ENCODE measurements at regions of chr12 and their contacts with region 1.

Region 1: GRCh38 chr12:96361074-96361473 is 39.2 kb downstream of the CDK17 start:
- DNase-seq: no peak
- ATAC-seq: no peak
- H3K4me3 ChIP-seq: no peak overlapping the region
- H3K4me3 Mint-ChIP-seq: no peak overlapping the region
- H3K27ac ChIP-seq: no peak overlapping the region
- H3K27ac Mint-ChIP-seq: no peak overlapping the region
- H3K4me1 ChIP-seq: peaks cover 24% of the 10 kb centered on the region
- H3K4me1 Mint-ChIP-seq: peaks cover 87% of the 10 kb centered on the region
- H3K27me3 ChIP-seq: no peaks in the 10 kb centered on the region
- H3K27me3 Mint-ChIP-seq: no peaks in the 10 kb centered on the region
- CTCF ChIP-seq: no peak

Region 2: DNA sequence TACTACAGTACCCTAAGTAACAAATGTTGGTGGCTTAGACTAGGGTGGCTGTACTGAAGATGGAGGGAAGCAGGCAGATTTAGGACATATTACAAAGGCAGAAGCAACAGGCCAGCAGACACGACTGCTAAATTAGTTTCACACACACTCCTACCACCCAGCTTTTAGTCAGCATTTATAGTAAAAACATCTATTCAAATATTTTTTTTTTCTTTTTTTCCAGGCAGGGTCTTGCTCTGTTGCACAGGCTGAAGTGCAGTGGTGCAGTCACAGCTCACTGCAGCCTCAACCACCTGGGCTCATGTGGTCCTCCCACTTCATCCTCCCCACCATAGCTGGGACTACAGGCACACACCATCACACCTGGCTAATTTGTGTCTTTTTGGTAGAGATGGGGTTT is 33.7 kb before region 1 on chr12:
- CTCF ChIA-PET with region 1: interaction called, 3 read pairs
- POLR2A ChIA-PET with region 1: no interaction called
- intact Hi-C with region 1: loop called in 1 of 2 experiments (anchors 5 kb)
- DNase-seq: no peak
- ATAC-seq: peak; percentile 8
- H3K4me3 ChIP-seq: no peak overlapping the region
- H3K4me3 Mint-ChIP-seq: peak overlapping the region; percentile 22
- H3K27ac ChIP-seq: no peak overlapping the region
- H3K27ac Mint-ChIP-seq: peak overlapping the region; percentile 76
- H3K4me1 ChIP-seq: peaks cover 8% of the 10 kb centered on the region
- H3K4me1 Mint-ChIP-seq: peaks cover 77% of the 10 kb centered on the region
- H3K27me3 ChIP-seq: no peaks in the 10 kb centered on the region
- H3K27me3 Mint-ChIP-seq: no peaks in the 10 kb centered on the region
- CTCF ChIP-seq: no peak

Region 3: DNA sequence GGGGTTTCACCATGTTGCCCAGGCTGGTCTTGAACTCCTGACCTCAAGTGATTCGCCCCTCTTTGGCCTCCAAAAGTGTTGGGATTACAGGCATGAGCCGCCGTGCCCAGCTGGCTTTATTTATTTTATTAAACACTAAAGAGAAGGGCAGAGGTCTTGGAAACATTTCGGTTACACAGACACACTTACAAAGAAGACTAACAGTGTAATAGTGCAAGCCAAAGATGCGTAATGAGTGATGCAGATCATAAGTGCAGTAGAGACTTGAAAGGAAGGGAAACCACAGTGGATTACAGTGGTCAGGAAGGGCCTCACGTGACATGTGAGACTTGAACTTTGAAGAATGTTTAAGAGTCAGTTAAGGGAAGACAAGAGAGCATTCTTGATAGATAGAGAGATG is 73.0 kb after region 1 on chr12:
- CTCF ChIA-PET with region 1: no interaction called
- POLR2A ChIA-PET with region 1: no interaction called
- intact Hi-C with region 1: no loop called
- DNase-seq: peak; percentile 37 to 95 (median 57)
- ATAC-seq: peak; percentile 98
- H3K4me3 ChIP-seq: peak overlapping the region; percentile 6
- H3K4me3 Mint-ChIP-seq: peak overlapping the region; percentile 52
- H3K27ac ChIP-seq: peak overlapping the region; percentile 50 to 73
- H3K27ac Mint-ChIP-seq: peak overlapping the region; percentile 75
- H3K4me1 ChIP-seq: peaks cover 40% of the 10 kb centered on the region
- H3K4me1 Mint-ChIP-seq: peaks cover 26% of the 10 kb centered on the region
- H3K27me3 ChIP-seq: no peaks in the 10 kb centered on the region
- H3K27me3 Mint-ChIP-seq: no peaks in the 10 kb centered on the region
- CTCF ChIP-seq: no peak

Region 4: DNA sequence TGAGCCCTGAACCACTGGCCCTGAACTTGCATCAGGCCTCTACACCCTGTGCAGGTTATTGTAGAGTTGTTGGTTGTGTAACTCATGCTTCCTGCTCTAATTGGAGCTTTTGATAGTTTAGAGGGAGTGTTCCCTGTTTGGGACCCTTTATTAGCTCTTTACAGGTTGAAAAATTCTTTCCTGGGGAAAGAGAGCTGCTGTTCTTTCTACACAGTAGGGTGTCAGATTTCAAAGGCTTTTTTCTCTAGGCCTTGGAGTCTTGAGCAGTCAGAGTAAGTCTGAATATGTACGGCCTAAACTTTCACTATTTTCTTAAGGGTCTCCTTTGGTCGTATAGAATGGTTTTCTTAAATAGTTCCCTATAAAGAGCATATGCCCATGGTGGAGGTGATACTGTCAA is 485.2 kb after region 1 on chr12:
- CTCF ChIA-PET with region 1: no interaction called
- POLR2A ChIA-PET with region 1: no interaction called
- intact Hi-C with region 1: no loop called
- DNase-seq: no peak
- ATAC-seq: no peak
- H3K4me3 ChIP-seq: no peak overlapping the region
- H3K4me3 Mint-ChIP-seq: no peak overlapping the region
- H3K27ac ChIP-seq: no peak overlapping the region
- H3K27ac Mint-ChIP-seq: no peak overlapping the region
- H3K4me1 ChIP-seq: no peaks in the 10 kb centered on the region
- H3K4me1 Mint-ChIP-seq: no peaks in the 10 kb centered on the region
- H3K27me3 ChIP-seq: peaks cover 3 to 12% of the 10 kb centered on the region in 2 experiments
- H3K27me3 Mint-ChIP-seq: peaks cover 4% of the 10 kb centered on the region
- CTCF ChIP-seq: no peak